ENCODE measurements at regions of chr6 and their contacts with region 1.

Region 1: DNA sequence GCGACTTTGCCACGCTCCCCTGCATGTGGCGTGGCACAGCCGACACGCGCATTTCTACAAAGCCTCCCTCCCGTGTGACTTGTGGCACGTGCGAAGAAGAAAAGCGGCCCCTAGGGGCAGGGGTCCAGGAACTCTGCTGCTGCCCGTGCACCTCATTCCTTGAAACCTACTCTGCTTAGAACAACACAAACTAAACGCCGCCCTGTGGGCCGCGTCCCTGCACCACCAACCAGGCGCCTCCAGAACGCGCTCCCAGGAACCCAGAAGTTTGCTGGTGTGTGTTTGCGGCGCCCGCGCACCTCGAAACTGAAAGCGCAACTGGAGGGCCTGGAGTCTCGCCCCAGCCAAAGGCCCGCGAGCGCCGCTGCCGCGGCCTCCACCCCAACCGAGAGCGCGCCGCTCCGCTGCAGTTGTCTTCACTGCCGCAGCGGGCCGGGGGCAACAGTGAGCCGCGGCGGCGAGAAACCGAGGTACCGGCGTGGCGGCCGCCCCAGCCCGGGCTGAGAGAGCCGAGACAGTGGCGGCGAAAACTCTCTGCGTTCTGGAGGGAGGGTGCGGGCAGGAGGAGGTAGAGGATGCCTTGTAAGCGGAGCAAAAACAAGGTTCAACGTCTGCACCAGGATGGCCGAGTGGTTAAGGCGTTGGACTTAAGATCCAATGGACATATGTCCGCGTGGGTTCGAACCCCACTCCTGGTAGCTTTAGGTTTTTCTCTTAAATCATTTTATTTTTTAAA is 65.8 kb downstream of the STX11 start:
- DNase-seq: peak; percentile 97
- ATAC-seq: peak; percentile 84
- H3K4me3 ChIP-seq: peak overlapping the region; percentile 76 to 85 (median 77)
- H3K4me3 Mint-ChIP-seq: peak overlapping the region; percentile 98
- H3K27ac ChIP-seq: peak overlapping the region; percentile 83
- H3K27ac Mint-ChIP-seq: peak overlapping the region; percentile 100
- H3K4me1 ChIP-seq: peaks cover 23 to 30% of the 10 kb centered on the region in 2 donors
- H3K4me1 Mint-ChIP-seq: peaks cover 40% of the 10 kb centered on the region
- H3K27me3 ChIP-seq: no peaks in the 10 kb centered on the region
- H3K27me3 Mint-ChIP-seq: peaks cover 3% of the 10 kb centered on the region
- CTCF ChIP-seq: peak; percentile 72

Region 2: GRCh38 chr6:143575440-143575839 is 640.7 kb before region 1 on chr6:
- CTCF ChIA-PET with region 1: interaction called, 3 read pairs
- POLR2A ChIA-PET with region 1: no interaction called
- intact Hi-C with region 1: loop called (anchors 2 kb)
- DNase-seq: peak; percentile 76
- ATAC-seq: peak; percentile 98
- H3K4me3 ChIP-seq: no peak overlapping the region
- H3K4me3 Mint-ChIP-seq: no peak overlapping the region
- H3K27ac ChIP-seq: no peak overlapping the region
- H3K27ac Mint-ChIP-seq: no peak overlapping the region
- H3K4me1 ChIP-seq: no peaks in the 10 kb centered on the region
- H3K4me1 Mint-ChIP-seq: no peaks in the 10 kb centered on the region
- H3K27me3 ChIP-seq: no peaks in the 10 kb centered on the region
- H3K27me3 Mint-ChIP-seq: no peaks in the 10 kb centered on the region
- CTCF ChIP-seq: peak; percentile 95

Region 3: GRCh38 chr6:144063744-144064401 is 152.2 kb before region 1 on chr6:
- CTCF ChIA-PET with region 1: interaction called, 5 read pairs
- POLR2A ChIA-PET with region 1: interaction called, 6 read pairs
- intact Hi-C with region 1: loop called (anchors 1 kb)
- DNase-seq: peak; percentile 97
- ATAC-seq: peak; percentile 91
- H3K4me3 ChIP-seq: peak overlapping the region; percentile 74 to 86 (median 82)
- H3K4me3 Mint-ChIP-seq: peak overlapping the region; percentile 90
- H3K27ac ChIP-seq: peak overlapping the region; percentile 88 to 96
- H3K27ac Mint-ChIP-seq: peak overlapping the region; percentile 92
- H3K4me1 ChIP-seq: peaks cover 21 to 32% of the 10 kb centered on the region in 2 donors
- H3K4me1 Mint-ChIP-seq: peaks cover 37% of the 10 kb centered on the region
- H3K27me3 ChIP-seq: no peaks in the 10 kb centered on the region
- H3K27me3 Mint-ChIP-seq: no peaks in the 10 kb centered on the region
- CTCF ChIP-seq: peak; percentile 14

Region 4: GRCh38 chr6:144149891-144150709 is 66.0 kb before region 1 on chr6 and contains the start of gene STX11:
- CTCF ChIA-PET with region 1: interaction called, 11 read pairs
- POLR2A ChIA-PET with region 1: interaction called, 6 read pairs
- intact Hi-C with region 1: loop called (anchors 1 kb)
- DNase-seq: peak; percentile 85
- ATAC-seq: peak; percentile 75
- H3K4me3 ChIP-seq: peak within 1 kb of the TSS; percentile 54 to 96 (median 76)
- H3K4me3 Mint-ChIP-seq: peak within 1 kb of the TSS; percentile 96
- H3K27ac ChIP-seq: peak within 1 kb of the TSS; percentile 61 to 78
- H3K27ac Mint-ChIP-seq: peak within 1 kb of the TSS; percentile 97
- H3K4me1 ChIP-seq: peaks cover 9 to 15% of the 10 kb centered on the region in 2 donors
- H3K4me1 Mint-ChIP-seq: peaks cover 42% of the 10 kb centered on the region
- H3K27me3 ChIP-seq: no peaks in the 10 kb centered on the region
- H3K27me3 Mint-ChIP-seq: no peaks in the 10 kb centered on the region
- CTCF ChIP-seq: no peak
- total RNA-seq, gene STX11: 10.3 and 11.6 TPM in 2 replicates

Region 5: GRCh38 chr6:144334131-144334708 is 118.1 kb after region 1 on chr6:
- CTCF ChIA-PET with region 1: interaction called, 3 read pairs
- POLR2A ChIA-PET with region 1: interaction called, 3 read pairs
- intact Hi-C with region 1: loop called (anchors 1 kb)
- DNase-seq: peak; percentile 92
- ATAC-seq: peak; percentile 76
- H3K4me3 ChIP-seq: peak overlapping the region in 4 of 5 experiments; percentile 34 to 53 (median 36)
- H3K4me3 Mint-ChIP-seq: peak overlapping the region; percentile 82
- H3K27ac ChIP-seq: peak overlapping the region; percentile 82 to 94
- H3K27ac Mint-ChIP-seq: peak overlapping the region; percentile 94
- H3K4me1 ChIP-seq: peaks cover 56 to 61% of the 10 kb centered on the region in 2 donors
- H3K4me1 Mint-ChIP-seq: peaks cover 73% of the 10 kb centered on the region
- H3K27me3 ChIP-seq: no peaks in the 10 kb centered on the region
- H3K27me3 Mint-ChIP-seq: no peaks in the 10 kb centered on the region
- CTCF ChIP-seq: no peak

Region 6: GRCh38 chr6:145963216-145964068 is 1747.3 kb after region 1 on chr6:
- CTCF ChIA-PET with region 1: no interaction called
- POLR2A ChIA-PET with region 1: no interaction called
- intact Hi-C with region 1: loop called (anchors 5 kb)
- DNase-seq: no peak
- ATAC-seq: peak; percentile 3
- H3K4me3 ChIP-seq: peak overlapping the region; percentile 71 to 89 (median 80)
- H3K4me3 Mint-ChIP-seq: peak overlapping the region; percentile 97
- H3K27ac ChIP-seq: peak overlapping the region; percentile 81 to 85
- H3K27ac Mint-ChIP-seq: peak overlapping the region; percentile 97
- H3K4me1 ChIP-seq: peaks cover 14 to 18% of the 10 kb centered on the region in 2 donors
- H3K4me1 Mint-ChIP-seq: peaks cover 47% of the 10 kb centered on the region
- H3K27me3 ChIP-seq: no peaks in the 10 kb centered on the region
- H3K27me3 Mint-ChIP-seq: no peaks in the 10 kb centered on the region
- CTCF ChIP-seq: no peak

Measured in B cell (primary cell).